ENCODE measurements at regions of chr22 and their contacts with region 1.

Region 1: GRCh38 chr22:21876486-21877176 is 9.2 kb upstream of the MAPK1 start:
- DNase-seq: peak; percentile 75 to 82 (median 78)
- ATAC-seq: peak; percentile 86
- H3K4me3 ChIP-seq: no peak overlapping the region
- H3K27ac ChIP-seq: no peak overlapping the region
- H3K4me1 ChIP-seq: peaks cover 9 to 13% of the 10 kb centered on the region in 2 experiments
- H3K27me3 ChIP-seq: peaks cover 1 to 20% of the 10 kb centered on the region in 2 experiments; a peak in 3 of 5 replicates
- CTCF ChIP-seq: no peak
- EP300 ChIP-seq: peak; percentile 89
- POLR2A ChIP-seq: no peak
- RAD21 ChIP-seq: no peak

Region 2: DNA sequence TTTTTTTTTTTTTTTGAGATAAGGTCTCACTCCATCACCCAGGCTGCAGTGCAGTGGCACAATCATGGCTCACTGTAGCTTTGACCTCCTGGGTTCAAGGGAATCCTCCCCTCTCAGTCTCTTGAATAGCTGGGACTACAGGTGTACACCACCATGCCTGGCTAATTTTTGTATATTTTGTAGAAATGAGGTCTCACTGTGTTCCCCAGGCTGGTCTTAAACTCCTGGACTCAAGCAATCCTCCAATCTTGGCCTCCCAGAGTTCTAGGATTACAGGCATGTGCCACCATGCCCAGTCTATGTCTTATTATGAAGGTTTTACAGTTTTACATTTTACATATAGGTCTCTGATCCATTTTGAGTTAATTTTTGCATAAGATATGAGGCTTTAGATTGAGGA is 11.2 kb after region 1 on chr22:
- CTCF ChIA-PET with region 1: interaction called, 5 read pairs
- POLR2A ChIA-PET with region 1: interaction called, 20 read pairs
- in situ Hi-C with region 1: no loop called
- intact Hi-C with region 1: no loop called
- DNase-seq: no peak
- ATAC-seq: no peak
- H3K4me3 ChIP-seq: no peak overlapping the region
- H3K27ac ChIP-seq: no peak overlapping the region
- H3K4me1 ChIP-seq: no peaks in the 10 kb centered on the region; a peak in 2 of 5 replicates
- H3K27me3 ChIP-seq: peaks cover 2 to 4% of the 10 kb centered on the region in 2 experiments; a peak in 2 of 5 replicates
- CTCF ChIP-seq: no peak
- EP300 ChIP-seq: no peak
- POLR2A ChIP-seq: no peak
- RAD21 ChIP-seq: no peak

Region 3: DNA sequence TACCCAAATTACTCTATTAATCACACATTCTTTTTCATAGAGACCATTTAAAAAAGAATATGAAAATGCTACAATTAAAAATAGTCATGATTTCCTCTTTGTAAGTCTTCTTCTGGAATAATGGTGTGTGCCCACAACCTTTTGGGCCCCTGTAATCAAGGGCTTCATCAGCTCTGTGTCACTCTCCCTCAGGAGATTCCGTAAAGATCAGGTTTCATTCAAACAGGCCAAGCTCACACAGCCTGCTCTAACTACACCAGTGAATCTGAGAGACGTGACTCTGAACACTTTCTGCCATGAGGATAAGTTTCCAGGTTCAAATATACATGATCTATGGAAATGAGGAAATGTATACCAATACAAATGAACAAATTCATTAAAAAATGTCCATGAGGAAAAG is 1746.0 kb after region 1 on chr22:
- CTCF ChIA-PET with region 1: no interaction called
- POLR2A ChIA-PET with region 1: no interaction called
- in situ Hi-C with region 1: no loop called
- intact Hi-C with region 1: no loop called
- DNase-seq: no peak
- ATAC-seq: no peak
- H3K4me3 ChIP-seq: no peak overlapping the region
- H3K27ac ChIP-seq: no peak overlapping the region
- H3K4me1 ChIP-seq: no peaks in the 10 kb centered on the region; a peak in 2 of 5 replicates
- H3K27me3 ChIP-seq: no peaks in the 10 kb centered on the region
- CTCF ChIP-seq: no peak
- EP300 ChIP-seq: no peak
- POLR2A ChIP-seq: no peak
- RAD21 ChIP-seq: no peak